Transverse colon (tissue), 4 donors: ENCODE measurements at regions of chr7 and their contacts with region 1.

Region 1: DNA sequence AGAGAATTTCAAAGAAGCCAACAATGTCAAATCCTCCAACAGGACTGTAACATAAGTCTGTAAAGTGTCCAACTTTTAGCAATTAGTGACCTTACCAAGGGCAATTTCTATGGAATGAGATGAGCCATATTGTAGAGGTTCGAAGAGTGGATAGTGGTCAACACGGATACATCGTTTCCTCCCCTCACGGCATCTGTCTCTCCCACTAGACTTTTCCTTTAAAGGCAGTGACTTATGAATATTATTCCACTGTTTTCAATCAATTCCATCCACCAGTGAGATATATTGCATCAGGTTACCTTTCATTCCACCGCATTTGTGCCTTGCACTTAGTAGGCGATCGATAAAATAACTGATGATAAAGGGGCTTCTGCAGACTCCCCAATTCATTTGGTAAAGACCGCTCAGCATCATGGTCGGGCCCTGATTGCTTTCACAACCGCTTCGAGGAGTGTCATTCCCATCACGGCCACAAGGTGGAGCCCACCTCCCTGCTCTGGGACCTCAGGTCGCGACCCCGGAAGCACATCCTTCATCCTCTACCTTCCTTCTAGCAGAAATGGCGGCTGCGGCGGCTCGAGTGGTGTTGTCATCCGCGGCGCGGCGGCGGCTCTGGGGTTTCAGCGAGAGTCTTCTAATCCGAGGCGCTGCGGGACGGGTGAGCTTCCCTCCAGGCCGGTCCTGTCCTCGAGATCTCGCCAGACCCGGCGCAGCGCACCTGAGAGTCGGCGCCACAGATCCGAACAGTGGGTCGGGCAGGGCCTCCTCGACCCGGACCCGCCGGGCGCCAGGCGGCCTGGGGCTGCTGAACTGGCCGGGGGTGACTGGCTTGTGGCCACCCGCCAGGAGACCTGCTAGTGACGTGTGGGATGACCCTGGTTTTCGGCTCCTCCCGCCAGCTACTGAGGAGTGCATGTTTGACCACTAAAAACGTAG is at the start of gene PMPCB:
- DNase-seq: peak; percentile 97
- H3K4me3 ChIP-seq: peak within 1 kb of the TSS; percentile 32 to 92 (median 71)
- H3K27ac ChIP-seq: peak within 1 kb of the TSS; percentile 72 to 89 (median 86)
- H3K4me1 ChIP-seq: peaks cover 7 to 25% (median 15%) of the 10 kb centered on the region in 4 donors
- H3K27me3 ChIP-seq: no peaks in the 10 kb centered on the region
- CTCF ChIP-seq: peak; percentile 95 to 98 (median 96)
- EP300 ChIP-seq: no peak
- POLR2A ChIP-seq: peak; percentile 44
- total RNA-seq, gene PMPCB: 20.6 to 64.6 (median 46.3) TPM

Region 2: DNA sequence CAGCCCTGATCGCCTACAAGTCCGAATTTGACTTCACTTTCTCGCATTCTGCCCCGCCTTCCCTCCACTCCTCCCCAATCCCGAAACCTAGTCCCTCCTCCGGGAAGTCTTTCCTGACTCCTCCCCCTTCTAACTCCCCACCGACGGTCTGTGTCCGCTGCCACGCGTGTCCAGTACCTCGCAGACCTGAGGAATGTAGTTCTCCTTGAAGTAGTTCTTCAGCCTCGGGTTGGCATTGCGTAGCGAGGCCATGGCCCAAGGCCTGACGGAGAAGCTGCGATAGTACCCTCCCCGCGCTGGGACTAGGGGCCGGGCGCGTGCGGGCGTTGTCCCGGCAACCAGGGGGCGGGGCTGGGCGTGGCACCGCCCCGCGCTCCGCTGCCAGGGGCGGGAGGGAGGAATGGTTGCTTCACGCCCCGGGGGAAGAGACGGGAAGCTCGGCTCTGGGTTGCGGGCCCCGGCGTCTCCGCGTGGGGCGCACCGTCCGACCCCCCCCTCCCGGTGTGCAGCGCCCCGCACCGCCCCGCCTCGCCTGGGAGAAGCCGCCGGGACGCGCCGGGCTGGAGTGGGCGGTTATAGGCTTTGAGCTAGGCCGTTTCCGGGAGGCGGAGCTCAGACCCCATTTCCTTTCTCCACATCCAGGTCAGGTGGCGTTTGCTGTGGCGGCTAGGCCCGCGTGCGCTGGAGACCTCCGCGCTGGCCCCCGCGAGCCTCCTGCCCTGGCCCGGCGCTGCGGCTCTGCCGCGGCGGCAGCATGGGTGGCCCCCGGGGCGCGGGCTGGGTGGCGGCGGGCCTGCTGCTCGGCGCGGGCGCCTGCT is 222.4 kb before region 1 on chr7 and contains the starts of genes ARMC10 and FBXL13:
- in situ Hi-C with region 1: loop called in 1 of 4 experiments (anchors 25 kb)
- intact Hi-C with region 1: no loop called
- DNase-seq: peak; percentile 92
- H3K4me3 ChIP-seq: peak within 1 kb of the TSS; percentile 67 to 85 (median 74)
- H3K27ac ChIP-seq: peak within 1 kb of the TSS; percentile 93 to 95 (median 94)
- H3K4me1 ChIP-seq: peaks cover 15 to 24% (median 21%) of the 10 kb centered on the region in 4 donors
- H3K27me3 ChIP-seq: no peaks in the 10 kb centered on the region
- CTCF ChIP-seq: peak in 4 of 5 experiments; percentile 25 to 53 (median 34)
- EP300 ChIP-seq: no peak
- POLR2A ChIP-seq: peak; percentile 53
- total RNA-seq, gene ARMC10: 12.7 to 50.7 (median 27.0) TPM
- total RNA-seq, gene FBXL13: 0.96 to 6.8 (median 1.9) TPM in 3 of 4 donors, not detected in the other